Activated B cell treated with CpG ODN at 0.5 μM for 24 hours (primary cell): ENCODE measurements at regions of chr12 and their contacts with region 1.

Region 1: GRCh38 chr12:31238764-31239387 is 87.1 kb downstream of the SINHCAF start:
- DNase-seq: peak; percentile 37
- ATAC-seq: peak; percentile 93
- H3K4me3 Mint-ChIP-seq: no peak overlapping the region
- H3K27ac Mint-ChIP-seq: no peak overlapping the region
- H3K4me1 Mint-ChIP-seq: peaks cover 10% of the 10 kb centered on the region
- H3K27me3 Mint-ChIP-seq: peaks cover 23% of the 10 kb centered on the region
- CTCF ChIP-seq: no peak

Region 2: DNA sequence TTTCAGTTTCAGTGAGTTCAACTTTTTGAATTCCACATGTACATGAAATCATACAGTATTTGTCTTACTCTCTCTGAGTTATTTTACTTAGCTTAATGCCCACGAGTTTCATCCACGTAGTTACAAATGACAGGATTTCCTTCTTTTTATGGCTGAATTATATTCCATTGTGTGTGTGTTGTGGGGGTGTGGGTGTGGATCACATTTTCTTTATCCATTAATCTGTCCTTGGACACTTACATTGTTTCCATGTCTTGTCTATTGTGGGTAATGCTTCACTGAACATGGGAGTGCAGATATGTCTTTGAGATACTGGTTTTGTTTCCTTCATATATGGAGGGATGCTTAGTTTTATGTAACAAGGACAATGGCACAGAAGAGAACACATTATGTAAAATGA is 1391.6 kb before region 1 on chr12:
- CTCF ChIA-PET with region 1: no interaction called
- POLR2A ChIA-PET with region 1: no interaction called
- intact Hi-C with region 1: no loop called
- DNase-seq: no peak
- ATAC-seq: no peak
- H3K4me3 Mint-ChIP-seq: no peak overlapping the region
- H3K27ac Mint-ChIP-seq: no peak overlapping the region
- H3K4me1 Mint-ChIP-seq: no peaks in the 10 kb centered on the region
- H3K27me3 Mint-ChIP-seq: no peaks in the 10 kb centered on the region
- CTCF ChIP-seq: no peak

Region 3: GRCh38 chr12:30985814-30986452 is 252.9 kb before region 1 on chr12:
- CTCF ChIA-PET with region 1: no interaction called
- POLR2A ChIA-PET with region 1: no interaction called
- intact Hi-C with region 1: loop called (anchors 2 kb)
- DNase-seq: no peak
- ATAC-seq: peak; percentile 40
- H3K4me3 Mint-ChIP-seq: no peak overlapping the region
- H3K27ac Mint-ChIP-seq: no peak overlapping the region
- H3K4me1 Mint-ChIP-seq: no peaks in the 10 kb centered on the region
- H3K27me3 Mint-ChIP-seq: no peaks in the 10 kb centered on the region
- CTCF ChIP-seq: no peak

Region 4: GRCh38 chr12:31106101-31106803 is 132.6 kb before region 1 on chr12:
- CTCF ChIA-PET with region 1: no interaction called
- POLR2A ChIA-PET with region 1: no interaction called
- intact Hi-C with region 1: no loop called
- DNase-seq: no peak
- ATAC-seq: no peak
- H3K4me3 Mint-ChIP-seq: no peak overlapping the region
- H3K27ac Mint-ChIP-seq: no peak overlapping the region
- H3K4me1 Mint-ChIP-seq: no peaks in the 10 kb centered on the region
- H3K27me3 Mint-ChIP-seq: no peaks in the 10 kb centered on the region
- CTCF ChIP-seq: no peak

Region 5: GRCh38 chr12:31117203-31118011 is 121.5 kb before region 1 on chr12:
- CTCF ChIA-PET with region 1: no interaction called
- POLR2A ChIA-PET with region 1: no interaction called
- intact Hi-C with region 1: loop called (anchors 1 kb)
- DNase-seq: peak; percentile 55
- ATAC-seq: peak; percentile 73
- H3K4me3 Mint-ChIP-seq: peak overlapping the region; percentile 79
- H3K27ac Mint-ChIP-seq: no peak overlapping the region
- H3K4me1 Mint-ChIP-seq: peaks cover 9% of the 10 kb centered on the region
- H3K27me3 Mint-ChIP-seq: no peaks in the 10 kb centered on the region
- CTCF ChIP-seq: no peak